Activated T-helper 1 cell treated with anti-CD3 and anti-CD28 coated beads, Interleukin-12 subunit alpha, Interleukin-12 subunit beta, Interleukin-2, Interleukin-4 antibody, amounts not matched to agents 30 ng/mL and 10 ng/mL and 1 ng/mL, durations not matched to agents 14 hours and 24 hours and 36 hours (primary cell): ENCODE measurements at regions of chr20 and their contacts with region 1.

Region 1: DNA sequence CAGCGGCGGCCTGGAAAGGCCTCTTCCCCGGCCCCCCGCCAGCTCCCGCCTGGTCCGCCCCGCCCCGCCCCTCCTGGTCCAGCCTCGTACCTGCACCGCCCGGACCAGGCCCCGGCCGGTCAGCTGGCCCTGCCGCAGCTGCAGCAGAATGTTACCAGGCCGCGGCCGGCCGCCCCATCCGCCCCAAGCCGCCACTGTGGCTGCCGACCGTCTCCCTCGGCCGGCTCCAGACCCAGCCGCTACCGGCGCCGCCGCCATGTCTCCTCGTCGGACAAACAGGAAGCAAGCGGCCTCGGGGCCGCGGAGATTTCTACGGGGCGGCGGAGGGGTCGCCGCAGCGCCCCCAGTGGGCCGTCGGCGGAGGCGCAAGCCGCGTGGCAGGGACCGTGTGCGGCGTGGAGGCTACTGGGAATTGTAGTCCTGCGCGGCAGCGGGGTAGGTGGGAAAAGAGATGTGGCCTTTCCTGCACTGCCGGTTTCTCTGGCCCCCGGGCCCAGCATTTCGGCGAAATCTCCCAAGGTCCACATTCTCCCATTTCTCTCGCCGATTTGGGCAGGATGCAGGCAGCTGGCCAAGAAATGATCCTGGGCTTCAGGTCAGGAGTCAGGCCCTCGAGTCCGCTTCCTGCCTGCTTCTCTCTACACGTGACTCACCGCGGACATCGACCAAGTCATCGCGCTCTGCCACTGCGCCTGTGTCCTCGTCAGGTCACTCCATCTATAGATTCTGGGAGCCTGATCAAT is at the start of gene TRPC4AP:
- DNase-seq: peak; percentile 88
- H3K4me3 Mint-ChIP-seq: peak within 1 kb of the TSS; percentile 92
- H3K27ac Mint-ChIP-seq: peak within 1 kb of the TSS; percentile 94
- H3K4me1 Mint-ChIP-seq: peaks cover 48% of the 10 kb centered on the region
- H3K27me3 Mint-ChIP-seq: no peaks in the 10 kb centered on the region
- total RNA-seq, gene TRPC4AP: 53.9 and 54.0 TPM in 2 replicates

Region 2: GRCh38 chr20:34825530-34826362 is 266.9 kb before region 1 on chr20 and contains the start of gene NCOA6:
- intact Hi-C with region 1: loop called (anchors 1 kb)
- DNase-seq: peak; percentile 68
- H3K4me3 Mint-ChIP-seq: peak within 1 kb of the TSS; percentile 97
- H3K27ac Mint-ChIP-seq: peak within 1 kb of the TSS; percentile 91
- H3K4me1 Mint-ChIP-seq: peaks cover 30% of the 10 kb centered on the region
- H3K27me3 Mint-ChIP-seq: peaks cover 13% of the 10 kb centered on the region
- total RNA-seq, gene NCOA6: 25.5 and 29.1 TPM in 2 replicates

Region 3: DNA sequence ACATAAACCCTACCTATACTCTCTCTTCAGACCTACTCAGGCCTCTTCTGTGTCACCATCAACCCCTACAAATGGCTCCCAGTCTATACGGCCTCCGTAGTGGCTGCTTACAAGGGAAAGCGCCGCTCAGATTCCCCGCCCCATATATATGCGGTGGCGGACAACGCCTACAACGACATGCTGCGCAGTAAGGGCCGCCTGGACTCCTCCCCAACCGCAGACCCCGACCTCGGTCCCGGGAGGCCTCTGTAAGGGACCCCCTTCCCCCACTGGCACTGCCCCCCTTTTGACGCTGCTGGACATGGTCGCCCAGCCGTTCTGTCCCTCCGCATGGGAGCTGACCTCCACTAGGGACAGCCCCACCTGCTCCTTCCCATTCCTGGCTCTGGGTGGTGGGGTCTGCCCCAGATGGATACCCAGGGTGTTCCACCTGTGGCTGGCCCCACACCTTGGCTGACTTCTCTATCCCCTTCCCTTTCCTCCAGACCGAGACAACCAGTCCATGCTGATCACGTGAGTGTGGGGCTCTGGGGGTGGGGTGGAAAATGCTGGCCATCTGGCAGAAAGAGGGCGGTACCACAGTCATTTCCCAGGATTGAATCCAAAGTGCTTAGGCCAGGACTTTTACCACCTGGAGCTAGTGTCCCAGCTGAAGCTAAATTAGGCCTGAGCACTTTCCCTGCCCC is 112.0 kb before region 1 on chr20:
- intact Hi-C with region 1: no loop called
- DNase-seq: no peak
- H3K4me3 Mint-ChIP-seq: no peak overlapping the region
- H3K27ac Mint-ChIP-seq: no peak overlapping the region
- H3K4me1 Mint-ChIP-seq: no peaks in the 10 kb centered on the region
- H3K27me3 Mint-ChIP-seq: peaks cover 9% of the 10 kb centered on the region

Region 4: GRCh38 chr20:35049776-35050352 is 42.8 kb before region 1 on chr20:
- intact Hi-C with region 1: no loop called
- DNase-seq: no peak
- H3K4me3 Mint-ChIP-seq: no peak overlapping the region
- H3K27ac Mint-ChIP-seq: peak overlapping the region; percentile 40
- H3K4me1 Mint-ChIP-seq: peaks cover 5% of the 10 kb centered on the region
- H3K27me3 Mint-ChIP-seq: no peaks in the 10 kb centered on the region

Region 5: DNA sequence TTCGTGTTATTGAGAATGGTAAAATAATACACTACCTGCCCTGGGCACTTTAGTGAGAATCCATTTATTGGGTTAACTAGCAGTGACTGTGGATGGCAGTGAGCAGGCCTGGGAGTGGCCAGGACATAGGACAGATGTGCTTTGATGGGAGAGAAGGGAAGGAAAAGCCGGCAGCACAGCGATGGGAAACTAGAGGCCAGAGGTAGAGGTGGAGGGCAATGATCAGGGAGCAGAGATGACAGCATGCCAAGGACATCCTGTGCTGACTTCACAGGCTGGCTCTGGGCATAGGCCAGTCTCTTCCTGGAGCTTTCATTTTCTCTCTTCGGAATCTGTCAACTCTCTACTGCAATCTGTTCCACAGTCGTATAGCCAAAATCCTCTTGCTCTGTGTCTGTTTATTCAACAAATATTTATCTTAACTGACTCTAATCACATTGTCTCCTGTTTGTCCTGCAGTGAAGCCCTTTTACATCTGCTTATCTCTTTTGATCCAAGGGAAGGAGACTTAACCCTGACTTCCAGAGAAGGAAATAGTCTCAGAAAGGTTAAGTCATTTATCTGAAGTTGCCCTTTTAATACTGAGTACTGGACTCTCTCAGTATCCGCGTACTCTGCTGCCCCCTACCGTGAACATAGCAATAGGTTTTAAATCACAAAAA is 115.4 kb after region 1 on chr20:
- intact Hi-C with region 1: loop called (anchors 1 kb)
- DNase-seq: peak; percentile 58
- H3K4me3 Mint-ChIP-seq: no peak overlapping the region
- H3K27ac Mint-ChIP-seq: no peak overlapping the region
- H3K4me1 Mint-ChIP-seq: no peaks in the 10 kb centered on the region
- H3K27me3 Mint-ChIP-seq: no peaks in the 10 kb centered on the region

Region 6: GRCh38 chr20:35277531-35278395 is 185.1 kb after region 1 on chr20 and contains the start of gene MMP24OS:
- intact Hi-C with region 1: loop called (anchors 2 kb)
- DNase-seq: peak; percentile 88
- H3K4me3 Mint-ChIP-seq: peak within 1 kb of the TSS; percentile 98
- H3K27ac Mint-ChIP-seq: peak within 1 kb of the TSS; percentile 99
- H3K4me1 Mint-ChIP-seq: peaks cover 18% of the 10 kb centered on the region
- H3K27me3 Mint-ChIP-seq: no peaks in the 10 kb centered on the region
- total RNA-seq, gene MMP24OS: 25.0 and 27.0 TPM in 2 replicates

Region 7: GRCh38 chr20:35454881-35455609 is 362.4 kb after region 1 on chr20 and contains the start of gene CEP250:
- intact Hi-C with region 1: loop called (anchors 5 kb)
- DNase-seq: peak; percentile 88
- H3K4me3 Mint-ChIP-seq: peak within 1 kb of the TSS; percentile 93
- H3K27ac Mint-ChIP-seq: peak within 1 kb of the TSS; percentile 99
- H3K4me1 Mint-ChIP-seq: peaks cover 22% of the 10 kb centered on the region
- H3K27me3 Mint-ChIP-seq: no peaks in the 10 kb centered on the region
- total RNA-seq, gene CEP250: 44.4 and 45.6 TPM in 2 replicates